Activated naive CD4-positive, alpha-beta T cell treated with anti-CD3 and anti-CD28 coated beads for 36 hours (primary cell): ENCODE measurements at regions of chr18 and their contacts with region 1.

Region 1: GRCh38 chr18:70205421-70206397 is at the start of gene RTTN:
- DNase-seq: peak; percentile 94
- H3K4me3 Mint-ChIP-seq: peak within 1 kb of the TSS; percentile 97
- H3K27ac Mint-ChIP-seq: peak within 1 kb of the TSS; percentile 98
- H3K4me1 Mint-ChIP-seq: peaks cover 20% of the 10 kb centered on the region
- H3K27me3 Mint-ChIP-seq: peaks cover 2% of the 10 kb centered on the region
- total RNA-seq, gene RTTN: 30.2 to 32.0 TPM

Region 2: GRCh38 chr18:68714609-68715496 is 1490.9 kb before region 1 on chr18 and contains the start of gene TMX3:
- CTCF ChIA-PET with region 1: no interaction called
- intact Hi-C with region 1: loop called (anchors 1 kb)
- DNase-seq: peak; percentile 90
- H3K4me3 Mint-ChIP-seq: peak within 1 kb of the TSS; percentile 96
- H3K27ac Mint-ChIP-seq: peak within 1 kb of the TSS; percentile 92
- H3K4me1 Mint-ChIP-seq: peaks cover 33% of the 10 kb centered on the region
- H3K27me3 Mint-ChIP-seq: no peaks in the 10 kb centered on the region
- total RNA-seq, gene TMX3: 35.5 to 41.3 TPM

Region 3: DNA sequence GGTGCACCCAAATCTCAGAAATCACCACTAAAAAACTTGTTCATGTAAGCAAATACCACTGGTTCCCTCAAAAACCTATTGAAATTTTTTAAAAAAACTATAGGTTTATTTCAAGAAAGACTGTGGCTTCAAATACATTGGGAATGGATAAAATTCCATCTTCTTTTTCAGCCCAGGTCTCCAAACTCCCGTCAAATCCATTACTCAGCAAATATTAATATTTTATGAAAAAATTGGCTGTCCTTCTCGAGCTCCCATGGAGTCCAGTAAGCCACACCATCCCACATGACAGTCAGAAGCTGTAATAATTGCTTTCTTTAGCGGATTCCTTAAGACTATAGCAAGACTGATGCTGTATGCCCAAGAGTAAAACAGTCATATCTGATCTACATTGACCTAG is 1009.4 kb before region 1 on chr18:
- CTCF ChIA-PET with region 1: no interaction called
- intact Hi-C with region 1: no loop called
- DNase-seq: no peak
- H3K4me3 Mint-ChIP-seq: no peak overlapping the region
- H3K27ac Mint-ChIP-seq: no peak overlapping the region
- H3K4me1 Mint-ChIP-seq: no peaks in the 10 kb centered on the region
- H3K27me3 Mint-ChIP-seq: no peaks in the 10 kb centered on the region

Region 4: DNA sequence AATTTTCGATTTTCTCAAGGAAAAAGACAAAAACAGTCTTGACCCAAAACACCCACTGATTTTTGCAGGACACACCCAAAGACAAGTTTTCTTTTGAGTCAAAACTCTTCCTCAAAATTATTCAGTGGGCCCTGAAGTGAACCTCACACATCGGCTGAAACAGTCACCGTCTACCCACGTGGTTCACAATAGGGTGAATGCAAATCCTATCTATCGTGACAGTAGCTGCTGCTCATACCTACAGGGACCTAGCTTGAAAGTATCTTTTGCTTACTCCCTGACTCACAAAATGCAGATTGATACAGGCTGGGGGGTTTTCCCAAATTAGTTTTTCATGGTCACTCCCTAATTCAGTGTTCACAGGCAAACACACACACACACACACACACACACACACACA is 247.3 kb before region 1 on chr18:
- CTCF ChIA-PET with region 1: no interaction called
- intact Hi-C with region 1: loop called (anchors 1 kb)
- DNase-seq: peak; percentile 66
- H3K4me3 Mint-ChIP-seq: peak overlapping the region; percentile 27
- H3K27ac Mint-ChIP-seq: no peak overlapping the region
- H3K4me1 Mint-ChIP-seq: peaks cover 24% of the 10 kb centered on the region
- H3K27me3 Mint-ChIP-seq: no peaks in the 10 kb centered on the region

Region 5: GRCh38 chr18:70036771-70037347 is 168.8 kb before region 1 on chr18:
- CTCF ChIA-PET with region 1: no interaction called
- intact Hi-C with region 1: no loop called
- DNase-seq: no peak
- H3K4me3 Mint-ChIP-seq: no peak overlapping the region
- H3K27ac Mint-ChIP-seq: no peak overlapping the region
- H3K4me1 Mint-ChIP-seq: no peaks in the 10 kb centered on the region
- H3K27me3 Mint-ChIP-seq: no peaks in the 10 kb centered on the region

Region 6: GRCh38 chr18:70172225-70172624 is 33.5 kb before region 1 on chr18:
- CTCF ChIA-PET with region 1: no interaction called
- intact Hi-C with region 1: no loop called
- DNase-seq: no peak
- H3K4me3 Mint-ChIP-seq: no peak overlapping the region
- H3K27ac Mint-ChIP-seq: no peak overlapping the region
- H3K4me1 Mint-ChIP-seq: no peaks in the 10 kb centered on the region
- H3K27me3 Mint-ChIP-seq: no peaks in the 10 kb centered on the region

Region 7: GRCh38 chr18:70288851-70289328 is 83.2 kb after region 1 on chr18 and contains the start of gene SOCS6:
- CTCF ChIA-PET with region 1: no interaction called
- intact Hi-C with region 1: loop called (anchors 1 kb)
- DNase-seq: peak; percentile 54
- H3K4me3 Mint-ChIP-seq: peak within 1 kb of the TSS; percentile 83
- H3K27ac Mint-ChIP-seq: no peak within 1 kb of the TSS
- H3K4me1 Mint-ChIP-seq: peaks cover 4% of the 10 kb centered on the region
- H3K27me3 Mint-ChIP-seq: peaks cover 42% of the 10 kb centered on the region
- total RNA-seq, gene SOCS6: 0.42 to 0.60 TPM

Region 8: DNA sequence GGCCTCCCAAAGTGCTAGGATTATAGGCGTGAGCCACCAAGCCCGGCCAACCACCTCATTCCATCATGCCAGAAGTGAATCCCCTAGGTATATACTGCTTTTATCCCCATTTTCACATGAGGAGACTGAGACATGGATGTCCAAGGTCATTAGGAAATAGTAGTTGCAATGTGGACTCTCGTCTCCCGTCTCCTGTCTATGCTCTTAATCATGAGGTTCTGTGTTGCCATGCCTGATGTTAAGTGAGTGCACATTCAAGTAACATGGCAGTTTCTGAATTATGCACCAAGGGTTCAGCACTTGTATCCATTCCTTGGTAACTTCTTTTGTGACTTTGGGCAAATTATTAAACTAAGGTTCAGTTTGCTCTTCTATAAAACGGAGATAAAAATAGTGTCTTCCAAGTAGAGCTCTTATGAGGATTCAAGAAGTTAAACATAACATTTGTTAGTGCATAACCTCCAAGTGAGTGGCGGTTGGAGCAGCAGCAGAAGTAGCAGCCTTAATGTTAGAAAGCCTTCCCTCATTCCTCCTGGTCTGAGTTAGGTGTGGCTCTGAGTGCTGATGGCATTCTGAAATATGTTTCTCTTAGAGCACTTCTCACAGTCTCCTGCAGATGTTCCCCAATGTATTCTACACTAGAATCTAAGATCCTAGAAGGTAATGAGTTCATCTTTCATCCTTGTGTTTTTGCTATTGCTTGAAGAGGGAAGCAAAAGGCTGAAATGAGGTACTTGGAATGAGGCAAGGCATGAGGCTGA is 105.0 kb after region 1 on chr18:
- CTCF ChIA-PET with region 1: no interaction called
- intact Hi-C with region 1: no loop called
- DNase-seq: no peak
- H3K4me3 Mint-ChIP-seq: no peak overlapping the region
- H3K27ac Mint-ChIP-seq: no peak overlapping the region
- H3K4me1 Mint-ChIP-seq: no peaks in the 10 kb centered on the region
- H3K27me3 Mint-ChIP-seq: no peaks in the 10 kb centered on the region

Region 9: DNA sequence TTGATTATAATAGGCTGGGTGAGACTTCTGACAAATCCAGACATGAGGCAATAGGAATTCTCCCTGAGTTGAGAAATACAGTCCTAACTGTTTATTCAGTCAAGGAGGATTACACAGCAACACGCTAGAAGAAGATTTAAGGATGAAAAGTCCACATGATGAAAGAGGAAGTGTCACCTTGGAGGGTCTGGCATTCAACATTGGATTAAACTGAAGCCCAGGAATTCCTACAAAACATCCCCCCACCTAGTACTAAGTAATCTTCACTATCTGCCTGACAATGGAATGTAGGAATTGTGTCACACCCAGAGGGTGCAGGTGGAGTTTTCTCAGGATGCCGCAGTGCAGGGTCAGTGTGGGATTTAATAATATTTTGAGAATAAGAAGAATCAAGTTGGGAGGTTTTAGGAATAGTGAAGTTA is 225.5 kb after region 1 on chr18:
- CTCF ChIA-PET with region 1: interaction called, 5 read pairs
- intact Hi-C with region 1: loop called (anchors 2 kb)
- DNase-seq: no peak
- H3K4me3 Mint-ChIP-seq: no peak overlapping the region
- H3K27ac Mint-ChIP-seq: no peak overlapping the region
- H3K4me1 Mint-ChIP-seq: no peaks in the 10 kb centered on the region
- H3K27me3 Mint-ChIP-seq: no peaks in the 10 kb centered on the region

Region 10: GRCh38 chr18:70621710-70622109 is 416.0 kb after region 1 on chr18:
- CTCF ChIA-PET with region 1: no interaction called
- intact Hi-C with region 1: loop called (anchors 10 kb)
- DNase-seq: no peak
- H3K4me3 Mint-ChIP-seq: peak overlapping the region; percentile 66
- H3K27ac Mint-ChIP-seq: peak overlapping the region; percentile 91
- H3K4me1 Mint-ChIP-seq: peaks cover 67% of the 10 kb centered on the region
- H3K27me3 Mint-ChIP-seq: no peaks in the 10 kb centered on the region

Region 11: GRCh38 chr18:70659036-70659925 is 453.6 kb after region 1 on chr18:
- CTCF ChIA-PET with region 1: no interaction called
- intact Hi-C with region 1: loop called (anchors 10 kb)
- DNase-seq: peak; percentile 79
- H3K4me3 Mint-ChIP-seq: peak overlapping the region; percentile 73
- H3K27ac Mint-ChIP-seq: peak overlapping the region; percentile 73
- H3K4me1 Mint-ChIP-seq: peaks cover 51% of the 10 kb centered on the region
- H3K27me3 Mint-ChIP-seq: no peaks in the 10 kb centered on the region